Heart left ventricle (tissue), 16 donors: ENCODE measurements at regions of chr2 and their contacts with region 1.

Region 1: DNA sequence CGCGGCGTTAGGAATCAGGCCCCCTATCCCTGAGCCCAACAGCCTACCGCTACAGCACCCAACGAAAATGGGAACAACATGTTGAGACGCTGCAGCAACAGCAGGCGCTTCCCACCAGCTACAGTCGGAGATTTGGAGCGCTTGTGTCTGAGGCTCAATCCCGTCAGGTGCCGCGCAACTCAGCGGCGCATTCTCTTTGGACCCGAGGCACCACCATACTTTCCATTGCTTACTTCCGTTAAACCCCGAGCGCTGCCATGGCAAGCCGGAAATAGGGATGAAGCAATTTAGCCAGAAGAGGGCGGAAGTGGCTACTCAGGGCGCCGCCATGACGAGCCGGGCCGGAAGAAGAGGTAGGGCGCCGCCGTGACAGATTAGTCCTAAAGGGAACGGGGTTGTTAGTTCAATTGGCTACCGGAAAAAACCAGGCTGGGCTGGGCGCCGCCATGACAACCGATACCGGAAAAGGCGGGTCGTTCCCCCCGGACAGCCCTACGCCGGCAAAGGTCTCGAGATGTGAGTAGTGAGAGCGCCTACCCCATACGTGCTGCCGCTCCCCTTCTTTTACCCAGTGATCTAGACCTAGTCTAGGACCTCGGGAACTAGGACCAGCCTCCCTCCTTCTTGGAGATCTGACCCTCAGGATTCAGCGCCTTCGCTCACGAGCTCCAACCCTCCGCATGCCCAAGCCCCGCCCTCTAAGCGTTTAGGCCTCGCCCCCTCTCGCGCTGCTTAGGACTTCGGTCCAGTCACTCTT is at the start of gene CHCHD5:
- DNase-seq: peak; percentile 94 to 96 (median 95)
- ATAC-seq: peak; percentile 91 to 96 (median 94)
- H3K4me3 ChIP-seq: peak within 1 kb of the TSS; percentile 59 to 82 (median 69)
- H3K27ac ChIP-seq: peak within 1 kb of the TSS; percentile 79 to 97 (median 92)
- H3K4me1 ChIP-seq: peaks cover 4 to 37% (median 18%) of the 10 kb centered on the region in 12 donors
- H3K27me3 ChIP-seq: no peaks in the 10 kb centered on the region
- CTCF ChIP-seq: peak in 11 of 12 donors; percentile 12 to 66 (median 39)
- POLR2A ChIP-seq: peak in 1 of 2 donors; percentile 53
- total RNA-seq, gene CHCHD5: 18.6 to 26.2 (median 22.1) TPM

Region 2: GRCh38 chr2:112121682-112122254 is 462.5 kb before region 1 on chr2:
- intact Hi-C with region 1: loop called in 1 of 10 experiments (anchors 10 kb)
- DNase-seq: no peak
- ATAC-seq: no peak
- H3K4me3 ChIP-seq: no peak overlapping the region
- H3K27ac ChIP-seq: no peak overlapping the region
- H3K4me1 ChIP-seq: no peaks in the 10 kb centered on the region
- H3K27me3 ChIP-seq: no peaks in the 10 kb centered on the region
- CTCF ChIP-seq: peak; percentile 42 to 72 (median 64)
- POLR2A ChIP-seq: no peak

Region 3: DNA sequence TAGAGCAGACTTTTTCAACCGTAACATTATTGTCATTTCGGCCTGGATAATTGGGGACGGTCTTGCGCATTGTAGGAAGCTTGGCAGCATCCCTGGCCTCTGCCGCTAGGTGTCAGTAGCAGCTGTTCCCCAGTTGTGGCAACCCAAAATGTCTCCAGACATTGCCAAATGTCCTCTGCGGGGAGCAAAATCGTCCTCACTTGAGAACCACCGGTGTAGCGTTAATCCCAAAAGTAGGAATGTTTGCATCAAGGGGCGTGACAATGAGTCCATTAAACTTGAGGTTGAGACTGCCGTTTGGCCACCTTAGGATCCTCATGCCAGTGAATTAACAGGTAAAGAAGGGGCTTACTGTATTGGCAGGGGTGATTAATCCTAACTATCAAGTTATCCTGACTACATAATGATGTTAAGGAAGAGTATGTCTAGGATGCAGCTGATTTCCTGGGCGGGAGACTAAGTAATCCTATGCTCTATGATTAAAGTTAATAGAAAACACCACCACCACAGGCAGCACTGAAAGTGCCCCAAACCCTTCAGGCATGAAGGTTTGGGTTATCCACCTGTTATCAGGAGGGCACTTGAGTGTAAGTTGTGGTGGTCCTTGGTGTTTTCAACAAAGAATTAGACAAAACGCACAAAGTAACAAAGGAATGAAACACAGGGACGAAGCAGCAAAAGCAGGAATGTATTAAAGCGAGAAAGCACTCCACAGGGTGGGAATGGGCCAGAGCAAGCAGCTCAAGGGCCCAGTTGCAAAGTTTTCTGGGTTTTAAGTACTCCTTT is 324.6 kb before region 1 on chr2:
- intact Hi-C with region 1: loop called in 2 of 10 experiments (anchors 5 to 10 kb)
- DNase-seq: peak; percentile 76 to 86 (median 84)
- ATAC-seq: peak; percentile 44 to 74 (median 67)
- H3K4me3 ChIP-seq: peak overlapping the region in 5 of 12 donors; percentile 14 to 32 (median 23)
- H3K27ac ChIP-seq: peak overlapping the region in 1 of 12 donors; percentile 37
- H3K4me1 ChIP-seq: peaks cover 0 to 22% (median 5%) of the 10 kb centered on the region in 12 donors
- H3K27me3 ChIP-seq: no peaks in the 10 kb centered on the region
- CTCF ChIP-seq: peak in 11 of 12 donors; percentile 87 to 98 (median 95)
- POLR2A ChIP-seq: no peak

Region 4: DNA sequence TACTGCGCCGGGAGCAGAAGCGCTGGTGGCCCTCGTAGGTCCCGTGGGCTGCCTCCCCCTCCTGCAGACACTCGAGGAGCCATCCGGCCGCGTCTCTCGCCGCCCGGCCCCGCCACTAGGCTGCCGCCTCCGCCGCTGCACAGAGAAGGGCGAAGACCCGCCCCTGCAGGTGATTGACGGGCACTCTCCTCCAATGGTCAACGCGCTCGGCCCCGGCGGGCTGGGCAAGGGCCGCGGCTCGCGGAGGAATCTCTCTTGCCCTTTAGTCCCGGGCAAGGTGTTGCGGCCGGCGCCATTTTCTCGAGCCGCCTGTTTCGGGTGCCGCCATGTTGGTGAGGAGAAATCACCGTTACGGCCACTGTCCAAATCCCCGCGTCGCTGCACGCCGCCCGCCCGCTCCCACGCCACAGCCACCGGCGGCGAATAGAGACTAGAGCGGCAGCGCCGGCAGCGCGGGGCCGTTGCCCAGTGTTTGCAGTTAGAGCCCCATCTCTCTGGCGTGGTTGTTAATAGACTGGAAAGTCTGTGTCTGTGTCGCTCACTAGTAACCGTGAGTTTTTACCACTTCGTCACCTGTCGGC is 308.9 kb before region 1 on chr2 and contains the start of gene ZC3H6:
- intact Hi-C with region 1: loop called in 3 of 10 experiments (anchors 5 to 10 kb)
- DNase-seq: peak; percentile 99 to 100 (median 99)
- ATAC-seq: peak; percentile 98 to 100 (median 99)
- H3K4me3 ChIP-seq: peak within 1 kb of the TSS; percentile 79 to 99 (median 86)
- H3K27ac ChIP-seq: peak within 1 kb of the TSS; percentile 96 to 100 (median 100)
- H3K4me1 ChIP-seq: peaks cover 0 to 25% (median 9%) of the 10 kb centered on the region in 12 donors
- H3K27me3 ChIP-seq: no peaks in the 10 kb centered on the region
- CTCF ChIP-seq: peak in 3 of 12 donors; percentile 16 to 36 (median 26)
- POLR2A ChIP-seq: peak in 1 of 2 donors; percentile 93
- total RNA-seq, gene ZC3H6: 11.3 to 30.1 (median 18.0) TPM

Region 5: GRCh38 chr2:112481050-112481527 is 103.2 kb before region 1 on chr2:
- intact Hi-C with region 1: loop called in 9 of 10 experiments (anchors 1 to 10 kb)
- DNase-seq: peak; percentile 83 to 92 (median 85)
- ATAC-seq: peak; percentile 85 to 93 (median 88)
- H3K4me3 ChIP-seq: peak overlapping the region; percentile 57 to 95 (median 72)
- H3K27ac ChIP-seq: peak overlapping the region; percentile 29 to 92 (median 88)
- H3K4me1 ChIP-seq: peaks cover 0 to 27% (median 19%) of the 10 kb centered on the region in 12 donors
- H3K27me3 ChIP-seq: no peaks in the 10 kb centered on the region
- CTCF ChIP-seq: peak; percentile 68 to 91 (median 78)
- POLR2A ChIP-seq: no peak

Region 6: GRCh38 chr2:112542123-112542983 is 42.0 kb before region 1 on chr2 and contains the start of gene POLR1B:
- intact Hi-C with region 1: loop called in 3 of 10 experiments (anchors 5 kb)
- DNase-seq: peak; percentile 85 to 89 (median 87)
- ATAC-seq: peak; percentile 94 to 97 (median 96)
- H3K4me3 ChIP-seq: peak within 1 kb of the TSS; percentile 69 to 93 (median 81)
- H3K27ac ChIP-seq: peak within 1 kb of the TSS; percentile 71 to 93 (median 86)
- H3K4me1 ChIP-seq: peaks cover 0 to 24% (median 12%) of the 10 kb centered on the region in 12 donors
- H3K27me3 ChIP-seq: no peaks in the 10 kb centered on the region
- CTCF ChIP-seq: no peak
- POLR2A ChIP-seq: peak in 1 of 2 donors; percentile 28
- total RNA-seq, gene POLR1B: 6.0 to 15.5 (median 10.4) TPM

Region 7: DNA sequence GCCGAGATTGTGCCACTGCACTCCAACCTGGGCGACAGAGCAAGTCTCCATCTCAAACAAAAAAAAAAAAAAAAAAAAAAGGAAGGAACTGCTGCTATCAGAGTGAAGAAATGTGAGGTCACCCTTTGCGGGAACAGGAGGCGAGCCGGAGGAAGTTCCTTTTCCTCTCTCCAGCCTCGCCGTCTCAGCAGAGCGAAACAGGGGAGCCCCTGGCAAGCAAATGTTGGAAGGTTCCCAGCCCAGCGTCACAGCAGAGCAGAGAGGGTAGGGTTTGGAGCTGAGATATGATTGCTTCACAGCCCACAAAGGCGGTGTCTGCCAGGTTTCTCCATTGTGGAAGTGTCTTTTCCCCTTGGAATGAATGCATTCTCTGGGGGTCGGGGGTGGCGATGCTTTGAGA is 89.9 kb after region 1 on chr2:
- intact Hi-C with region 1: no loop called
- DNase-seq: peak; percentile 76 to 86 (median 79)
- ATAC-seq: peak; percentile 71 to 98 (median 92)
- H3K4me3 ChIP-seq: peak overlapping the region in 1 of 12 donors; percentile 19
- H3K27ac ChIP-seq: peak overlapping the region in 3 of 12 donors; percentile 2 to 65 (median 11)
- H3K4me1 ChIP-seq: peaks cover 0 to 23% (median 0%) of the 10 kb centered on the region in 12 donors
- H3K27me3 ChIP-seq: no peaks in the 10 kb centered on the region
- CTCF ChIP-seq: no peak
- POLR2A ChIP-seq: no peak